MCF 10A (cell line): ENCODE measurements at regions of chr1 and their contacts with region 1.

Region 1: DNA sequence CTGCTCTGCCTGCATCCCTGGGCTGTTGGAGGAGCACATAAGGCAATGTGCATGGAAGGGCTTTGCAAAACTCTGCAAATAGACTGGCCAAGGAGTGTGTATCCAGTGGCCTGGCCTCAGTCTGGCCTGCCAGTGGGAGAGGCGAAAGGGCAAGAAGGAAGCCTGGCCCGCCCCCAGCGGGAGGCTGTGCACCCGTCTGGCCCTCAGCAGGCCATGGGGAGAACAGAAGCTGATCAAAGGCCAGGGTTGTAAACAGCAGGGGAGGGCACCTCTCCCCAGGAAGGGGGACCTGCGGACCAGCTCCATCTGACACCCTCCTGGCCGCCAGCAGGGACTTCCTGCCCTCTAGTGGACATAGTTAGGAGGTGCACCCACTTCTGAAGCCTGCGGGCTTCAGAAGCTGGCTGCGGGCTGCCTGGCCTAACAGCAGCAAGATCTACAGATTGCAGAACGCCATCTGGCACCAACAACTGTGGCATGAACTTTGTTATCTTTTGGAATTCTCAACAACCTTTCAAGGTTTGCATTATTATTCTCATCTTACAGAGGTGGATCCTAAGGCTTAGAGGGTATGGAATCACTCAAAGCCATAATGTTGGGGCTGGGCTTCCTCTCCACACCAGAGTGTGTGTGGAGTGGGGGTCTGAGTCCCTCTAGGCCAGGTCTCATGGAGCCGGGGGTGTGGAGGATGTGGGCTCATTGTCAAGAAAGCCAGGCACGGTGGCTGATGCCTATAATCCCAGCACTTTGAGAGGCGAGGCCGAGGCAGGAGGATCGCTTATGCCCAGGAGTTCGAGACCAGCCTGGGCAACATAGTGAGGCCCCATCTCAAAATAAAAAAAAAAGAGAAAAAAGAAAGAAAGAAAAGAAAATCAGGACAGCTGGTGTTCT is 18.9 kb upstream of the CDK18 start:
- DNase-seq: peak; percentile 88
- H3K4me3 Mint-ChIP-seq: no peak overlapping the region
- H3K27ac Mint-ChIP-seq: no peak overlapping the region
- H3K4me1 Mint-ChIP-seq: peaks cover 14% of the 10 kb centered on the region
- H3K27me3 Mint-ChIP-seq: peaks cover 42% of the 10 kb centered on the region
- CTCF ChIP-seq: peak; percentile 100

Region 2: DNA sequence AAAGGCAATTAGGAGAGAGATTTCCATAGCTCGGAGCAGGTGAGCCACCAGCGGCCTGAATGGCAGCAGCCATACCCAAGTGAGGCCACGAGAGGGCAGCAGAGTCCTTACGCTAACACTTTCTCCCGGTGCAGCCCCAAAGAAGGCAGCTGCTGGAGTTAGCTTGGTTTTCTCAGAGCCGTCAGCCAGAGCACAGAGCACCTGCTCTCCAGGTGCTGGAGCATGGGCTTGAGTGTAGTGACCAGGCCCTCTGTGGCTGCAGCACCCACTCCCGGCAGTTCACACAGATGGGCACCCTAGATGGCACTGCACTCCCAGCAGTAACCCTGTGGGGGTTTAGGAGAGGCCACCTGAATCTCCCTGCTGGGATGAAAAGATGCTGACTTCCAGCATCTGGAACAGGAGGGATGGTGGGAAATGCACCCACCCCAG is 212.0 kb before region 1 on chr1:
- CTCF ChIA-PET with region 1: interaction called, 67 read pairs
- POLR2A ChIA-PET with region 1: interaction called, 4 read pairs
- intact Hi-C with region 1: loop called (anchors 2 kb)
- DNase-seq: peak; percentile 93
- H3K4me3 Mint-ChIP-seq: no peak overlapping the region
- H3K27ac Mint-ChIP-seq: no peak overlapping the region
- H3K4me1 Mint-ChIP-seq: peaks cover 27% of the 10 kb centered on the region
- H3K27me3 Mint-ChIP-seq: peaks cover 9% of the 10 kb centered on the region
- CTCF ChIP-seq: peak; percentile 100

Region 3: GRCh38 chr1:205375835-205376545 is 109.6 kb before region 1 on chr1:
- CTCF ChIA-PET with region 1: interaction called, 207 read pairs
- POLR2A ChIA-PET with region 1: interaction called, 4 read pairs
- intact Hi-C with region 1: no loop called
- DNase-seq: peak; percentile 90
- H3K4me3 Mint-ChIP-seq: no peak overlapping the region
- H3K27ac Mint-ChIP-seq: no peak overlapping the region
- H3K4me1 Mint-ChIP-seq: peaks cover 36% of the 10 kb centered on the region
- H3K27me3 Mint-ChIP-seq: no peaks in the 10 kb centered on the region
- CTCF ChIP-seq: no peak

Region 4: DNA sequence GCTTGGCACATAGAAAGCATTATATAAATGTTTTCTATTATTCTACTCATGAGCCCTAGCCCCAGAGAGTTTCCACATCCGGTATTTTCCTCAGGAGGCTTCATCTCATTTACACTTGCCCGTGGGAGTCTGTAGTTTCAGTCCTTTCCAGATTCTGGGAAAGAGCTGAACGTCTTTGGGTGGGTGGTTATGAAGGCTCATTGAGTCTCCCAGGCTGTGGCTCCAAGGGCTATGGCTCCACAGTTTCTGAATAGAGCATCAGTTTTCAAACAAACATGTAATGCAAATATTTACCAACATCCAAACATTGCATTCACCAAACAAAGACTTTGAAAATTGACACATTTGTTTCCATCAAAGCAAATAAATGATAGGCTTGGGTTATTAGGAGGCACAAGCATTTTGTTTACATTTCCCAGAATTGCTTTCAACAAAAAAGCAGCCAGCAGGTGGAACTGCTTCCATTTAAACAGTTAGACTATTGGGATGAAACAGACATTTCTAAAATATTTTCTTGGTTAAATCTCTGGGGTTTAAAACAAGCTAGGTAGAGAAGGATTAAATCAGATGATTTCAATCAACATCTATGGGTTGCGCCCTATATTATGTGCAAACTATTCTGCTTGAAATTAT is 62.5 kb before region 1 on chr1:
- CTCF ChIA-PET with region 1: interaction called, 296 read pairs
- POLR2A ChIA-PET with region 1: interaction called, 11 read pairs
- intact Hi-C with region 1: loop called (anchors 1 kb)
- DNase-seq: no peak
- H3K4me3 Mint-ChIP-seq: no peak overlapping the region
- H3K27ac Mint-ChIP-seq: no peak overlapping the region
- H3K4me1 Mint-ChIP-seq: no peaks in the 10 kb centered on the region
- H3K27me3 Mint-ChIP-seq: peaks cover 67% of the 10 kb centered on the region
- CTCF ChIP-seq: peak; percentile 49

Region 5: DNA sequence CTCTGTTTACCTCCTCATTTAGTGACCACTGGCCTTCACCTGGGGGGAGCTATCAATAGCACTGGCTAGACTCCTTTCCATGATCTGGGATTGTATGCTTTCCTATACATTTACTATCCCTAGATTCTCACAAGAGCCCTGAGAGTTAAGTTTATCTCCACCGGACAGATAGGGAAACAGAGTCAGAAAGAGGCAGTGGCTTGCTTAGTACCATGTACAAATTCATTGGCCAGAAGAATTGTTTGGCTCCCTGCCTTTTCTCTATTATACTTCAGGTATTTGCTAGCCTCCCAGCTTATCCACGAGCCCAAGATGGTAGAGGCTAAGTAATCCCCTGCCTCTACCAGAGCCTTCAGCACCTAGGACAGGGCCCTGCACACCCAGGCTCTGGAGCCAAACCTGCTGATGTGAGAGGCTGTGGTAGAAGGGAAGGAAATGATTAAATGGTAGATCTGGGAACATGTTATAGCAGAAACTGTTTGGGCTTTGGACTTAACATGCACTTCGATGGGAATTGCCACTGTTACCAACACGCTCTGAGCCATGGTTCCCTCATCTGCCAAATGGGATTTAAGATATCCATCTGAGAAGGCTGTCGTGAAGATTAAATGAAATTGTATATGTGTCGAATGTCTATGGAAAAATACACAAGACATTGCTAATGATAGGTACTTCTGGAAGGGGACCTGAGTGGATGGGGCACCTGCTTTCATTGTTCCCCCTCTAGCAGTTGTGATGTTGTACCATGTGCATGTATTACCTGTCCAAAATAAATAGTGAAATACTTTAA is 26.6 kb before region 1 on chr1:
- CTCF ChIA-PET with region 1: interaction called, 21 read pairs
- POLR2A ChIA-PET with region 1: no interaction called
- intact Hi-C with region 1: no loop called
- DNase-seq: peak; percentile 79
- H3K4me3 Mint-ChIP-seq: no peak overlapping the region
- H3K27ac Mint-ChIP-seq: no peak overlapping the region
- H3K4me1 Mint-ChIP-seq: peaks cover 9% of the 10 kb centered on the region
- H3K27me3 Mint-ChIP-seq: peaks cover 68% of the 10 kb centered on the region
- CTCF ChIP-seq: no peak

Region 6: DNA sequence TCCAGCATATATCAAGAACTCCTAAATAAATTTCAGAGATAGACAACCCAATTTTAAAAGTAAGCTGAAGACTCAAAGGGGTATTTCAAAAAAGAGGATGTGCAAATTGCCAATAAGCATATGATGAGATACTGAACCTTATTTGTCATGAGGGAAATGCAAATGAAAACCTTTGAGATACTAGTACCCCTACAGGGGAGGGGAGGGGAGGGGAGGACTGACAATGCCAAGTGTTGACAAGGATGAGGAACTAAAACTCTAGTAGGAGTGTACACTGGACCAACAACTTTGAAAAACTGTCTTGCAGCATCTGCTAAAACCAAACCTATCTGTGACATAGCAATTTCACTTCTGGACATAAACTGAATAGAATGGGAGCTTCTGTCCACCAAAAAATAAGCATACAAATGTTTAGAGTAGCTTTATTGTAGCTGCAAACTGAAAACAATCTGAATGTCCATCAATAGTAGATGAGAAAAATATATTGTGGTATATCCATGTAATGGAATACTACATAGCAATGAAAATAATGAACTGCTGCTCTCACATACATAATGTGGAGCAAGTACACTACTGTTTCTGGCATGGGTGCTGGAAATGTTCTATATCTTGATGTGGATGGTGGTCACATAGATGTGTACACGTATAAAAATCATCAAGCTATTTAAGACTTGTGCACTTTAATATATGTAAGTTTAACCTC is 76.1 kb after region 1 on chr1:
- CTCF ChIA-PET with region 1: interaction called, 11 read pairs
- POLR2A ChIA-PET with region 1: no interaction called
- intact Hi-C with region 1: no loop called
- DNase-seq: no peak
- H3K4me3 Mint-ChIP-seq: no peak overlapping the region
- H3K27ac Mint-ChIP-seq: no peak overlapping the region
- H3K4me1 Mint-ChIP-seq: no peaks in the 10 kb centered on the region
- H3K27me3 Mint-ChIP-seq: peaks cover 71% of the 10 kb centered on the region
- CTCF ChIP-seq: no peak

Region 7: DNA sequence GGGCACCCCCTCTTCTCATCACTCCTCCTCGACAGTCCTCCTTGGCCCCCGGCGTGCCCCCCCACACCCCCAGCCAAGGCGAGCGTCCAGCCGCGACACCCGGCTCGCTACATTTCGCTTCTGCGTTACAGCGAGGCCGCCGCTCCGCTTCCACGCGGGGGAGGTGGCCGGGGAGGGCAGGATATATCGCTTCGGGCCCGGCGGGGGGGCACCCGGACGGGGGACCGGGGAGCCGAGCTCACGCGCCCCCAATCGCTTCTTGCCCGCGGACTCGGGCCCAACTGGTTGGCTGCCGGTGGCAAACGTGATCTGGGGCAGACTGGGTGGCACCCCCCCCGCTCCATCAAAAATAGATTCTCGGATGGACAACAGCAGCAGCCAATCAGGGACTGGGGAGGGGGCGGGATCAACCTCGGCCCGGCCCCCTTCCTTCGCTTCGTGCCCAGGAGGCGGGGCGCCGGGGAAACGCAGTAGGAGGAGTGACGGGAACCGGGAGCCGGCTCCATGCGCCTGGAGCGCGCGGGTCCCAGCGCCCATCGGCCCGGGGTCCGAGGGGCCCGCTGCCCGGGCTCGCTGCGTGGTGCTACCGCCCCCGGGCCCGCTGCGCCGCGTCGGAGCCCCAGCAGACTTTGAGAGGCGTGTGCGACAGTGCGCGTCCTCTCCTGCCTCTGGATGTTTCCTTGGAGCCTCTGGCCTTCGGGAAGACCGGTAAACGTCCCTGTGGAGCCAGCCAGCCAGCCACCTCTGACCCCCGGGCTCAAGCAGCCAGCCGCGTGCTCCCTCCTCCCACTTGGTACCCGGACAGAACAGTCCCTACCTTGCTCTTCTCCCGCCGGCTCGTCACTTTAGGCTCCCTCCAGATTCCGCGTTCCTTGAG is 327.5 kb after region 1 on chr1 and contains the start of gene SLC41A1:
- CTCF ChIA-PET with region 1: no interaction called
- POLR2A ChIA-PET with region 1: no interaction called
- intact Hi-C with region 1: no loop called
- DNase-seq: peak; percentile 98
- H3K4me3 Mint-ChIP-seq: peak within 1 kb of the TSS; percentile 87
- H3K27ac Mint-ChIP-seq: peak within 1 kb of the TSS; percentile 40
- H3K4me1 Mint-ChIP-seq: peaks cover 42% of the 10 kb centered on the region
- H3K27me3 Mint-ChIP-seq: no peaks in the 10 kb centered on the region
- CTCF ChIP-seq: no peak
- total RNA-seq, gene SLC41A1: 48.8 and 49.7 TPM in 2 replicates